PC-9 (cell line): ENCODE measurements at regions of chr6 and their contacts with region 1.

Region 1: DNA sequence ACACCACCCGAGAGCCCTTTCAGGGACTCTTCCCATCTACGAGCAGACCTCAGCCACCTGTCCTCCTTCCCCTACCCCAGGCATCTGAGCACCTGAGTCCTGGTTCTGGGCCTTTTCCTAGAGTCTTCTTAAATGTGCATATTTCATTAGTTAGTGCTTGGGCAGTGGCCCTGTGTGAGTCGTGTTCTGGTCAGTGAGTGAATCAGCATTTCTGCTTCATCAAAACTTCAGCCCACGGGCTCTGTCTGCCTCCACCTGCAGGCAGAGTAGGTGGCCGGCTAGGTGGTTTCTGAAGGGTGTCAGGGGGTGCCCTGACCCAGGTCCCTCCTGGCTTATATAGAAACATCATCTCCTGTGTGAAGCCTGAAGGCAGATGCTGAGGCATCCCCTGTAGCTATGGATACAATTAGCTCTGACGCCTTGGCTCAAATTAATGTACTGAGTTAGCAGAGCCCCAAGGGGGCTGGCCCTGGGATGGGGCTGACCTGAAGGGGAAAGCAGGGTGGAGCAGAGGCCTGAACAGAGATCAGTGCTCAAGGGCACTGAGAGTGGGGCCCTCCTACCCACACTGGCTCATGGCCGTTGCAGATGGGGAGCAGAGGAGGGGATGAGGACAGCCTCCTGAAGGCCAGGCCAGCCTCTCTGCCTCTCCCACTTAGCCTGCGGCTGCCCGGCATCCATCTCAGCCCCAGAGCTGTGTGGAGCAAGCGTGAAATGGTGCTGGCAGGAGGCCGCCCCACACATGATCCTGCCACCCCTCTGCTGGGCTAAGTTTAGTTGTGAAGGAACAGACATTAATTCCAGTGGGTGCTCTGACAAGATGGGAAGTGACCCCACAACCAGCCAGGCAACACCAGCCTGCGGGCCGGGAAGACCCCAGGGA is 13.6 kb downstream of the IP6K3 start:
- DNase-seq: peak in 1 of 2 experiments; percentile 41
- H3K4me3 ChIP-seq: no peak overlapping the region
- H3K27ac ChIP-seq: peak overlapping the region; percentile 82
- H3K4me1 ChIP-seq: peaks cover 40% of the 10 kb centered on the region
- H3K27me3 ChIP-seq: no peaks in the 10 kb centered on the region
- CTCF ChIP-seq: no peak

Region 2: DNA sequence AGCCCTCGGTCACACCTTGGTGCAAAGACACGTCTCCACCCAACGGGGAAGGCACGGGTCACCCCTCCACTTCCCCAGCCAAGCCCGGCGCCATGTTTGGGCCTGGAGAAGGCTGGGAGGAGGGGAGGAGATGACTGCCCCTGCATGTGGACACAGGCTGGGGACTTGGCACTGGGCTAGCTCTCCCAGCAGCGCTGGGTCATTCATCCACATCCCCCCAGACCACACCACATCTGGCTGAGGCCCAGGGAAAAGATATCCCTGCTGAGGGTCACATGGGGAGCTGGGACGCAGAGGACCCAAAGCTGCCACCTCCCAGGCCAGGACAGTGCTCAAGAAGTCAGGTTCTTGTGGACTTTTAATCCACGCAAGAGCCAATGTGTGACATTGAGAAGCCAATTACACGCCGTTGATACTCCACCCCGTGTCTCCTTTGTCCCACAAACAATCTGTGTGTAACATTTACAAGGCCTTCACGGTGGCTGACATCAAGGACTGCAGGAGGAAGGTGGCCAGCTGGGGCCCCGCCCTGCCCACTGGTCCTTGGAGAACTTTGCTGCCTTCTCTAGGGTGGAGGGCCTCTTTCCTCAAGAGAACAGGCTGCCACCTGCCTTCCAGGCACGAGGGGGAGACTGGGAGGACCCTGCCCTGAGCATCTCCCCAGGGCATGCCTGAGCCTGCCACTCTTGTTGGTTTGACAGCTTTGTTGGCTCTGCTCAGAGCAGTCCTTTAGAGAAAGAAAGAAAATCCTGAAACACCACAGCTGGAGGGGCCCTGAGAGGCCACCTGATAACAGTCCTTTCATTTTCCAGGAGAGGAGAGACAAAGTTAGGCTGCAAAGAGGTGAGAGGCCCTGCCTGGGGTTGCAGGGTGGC is 18.9 kb after region 1 on chr6:
- CTCF ChIA-PET with region 1: interaction called, 10 read pairs
- POLR2A ChIA-PET with region 1: no interaction called
- intact Hi-C with region 1: no loop called
- DNase-seq: peak in 1 of 2 experiments; percentile 37
- H3K4me3 ChIP-seq: no peak overlapping the region
- H3K27ac ChIP-seq: no peak overlapping the region
- H3K4me1 ChIP-seq: peaks cover 41% of the 10 kb centered on the region
- H3K27me3 ChIP-seq: no peaks in the 10 kb centered on the region
- CTCF ChIP-seq: no peak